ENCODE measurements at regions of chr19 and their contacts with region 1.

Region 1: DNA sequence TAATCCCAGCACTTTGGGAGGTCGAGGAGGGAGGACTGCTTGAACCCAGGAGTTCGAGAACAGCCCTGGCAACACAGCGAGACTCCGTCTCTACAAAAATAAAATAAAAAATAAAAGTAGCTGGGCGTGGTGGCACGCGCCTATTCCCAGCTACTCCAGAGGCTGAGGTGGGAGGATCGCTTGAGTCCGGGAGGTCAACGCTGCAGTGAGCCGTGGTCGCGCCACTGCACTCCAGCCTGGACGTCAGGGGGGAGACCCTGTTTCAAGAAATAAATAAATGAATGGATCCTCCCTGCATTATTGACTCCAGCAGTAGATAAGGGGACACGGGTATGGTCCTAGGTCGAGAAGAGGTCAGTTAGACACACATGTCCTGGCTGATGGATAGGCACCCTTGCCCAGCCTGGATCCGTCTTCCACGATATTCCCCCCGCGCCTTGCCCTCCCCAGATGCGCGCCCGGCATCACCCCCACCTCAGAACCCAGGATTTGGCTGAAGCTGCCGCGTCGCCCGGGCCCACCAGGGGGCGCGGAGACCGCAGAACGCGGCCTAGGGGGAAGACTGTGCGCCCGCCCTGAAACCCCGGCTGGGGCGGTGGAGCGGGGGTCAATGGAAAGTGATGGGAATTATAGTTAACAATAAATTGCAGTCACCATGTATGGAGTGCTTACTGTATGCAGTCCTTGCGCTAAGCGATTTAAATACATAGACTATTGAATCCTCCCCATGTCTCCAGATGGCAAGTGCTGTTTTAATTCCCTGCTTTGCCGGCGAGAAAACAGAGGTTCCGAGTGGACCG is 2.1 kb upstream of the HOOK2 start:
- DNase-seq: peak; percentile 83 to 91 (median 87)
- ATAC-seq: peak; percentile 27 to 52 (median 40)
- H3K4me3 ChIP-seq: peak overlapping the region; percentile 41 to 83 (median 68)
- H3K27ac ChIP-seq: peak overlapping the region; percentile 78 to 99 (median 94)
- H3K4me1 ChIP-seq: peaks cover 0 to 64% (median 49%) of the 10 kb centered on the region in 12 donors
- H3K27me3 ChIP-seq: no peaks in the 10 kb centered on the region
- CTCF ChIP-seq: peak; percentile 93 to 98 (median 97)
- POLR2A ChIP-seq: peak in 1 of 2 donors; percentile 15

Region 2: DNA sequence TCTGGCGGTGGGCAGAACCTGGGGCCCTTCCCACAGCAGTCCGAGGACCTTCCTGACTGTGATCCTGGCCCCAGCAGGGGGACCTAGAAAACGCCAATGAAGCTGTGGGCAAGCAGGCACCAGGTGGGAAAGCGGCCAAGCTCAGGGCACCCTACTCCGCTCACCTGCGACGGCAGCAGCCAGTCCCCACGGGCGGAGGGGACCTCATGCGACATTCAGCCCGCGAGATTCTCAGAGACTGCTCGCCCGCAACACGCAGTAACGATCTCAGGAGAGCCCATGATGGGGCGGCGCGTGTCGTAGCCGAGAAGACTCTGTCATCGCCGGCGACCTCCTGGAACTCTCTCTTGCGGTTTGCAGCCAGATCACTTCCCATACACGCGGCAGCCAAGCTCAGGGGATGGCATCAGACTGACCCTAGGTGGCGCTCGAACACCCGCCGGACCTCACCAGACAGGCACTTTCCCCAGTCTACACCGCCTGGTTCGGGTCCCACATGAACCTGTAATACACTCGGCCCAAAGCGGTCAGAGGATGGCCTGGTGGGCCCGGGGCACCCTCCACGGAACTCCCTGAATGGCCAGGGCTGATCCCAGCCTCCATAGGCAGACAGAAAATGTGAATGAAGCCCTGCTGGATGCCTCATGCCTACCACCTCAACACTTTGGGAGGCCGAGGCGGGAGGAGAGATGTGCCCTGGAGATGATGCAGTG is 137.4 kb before region 1 on chr19:
- intact Hi-C with region 1: no loop called
- DNase-seq: peak; percentile 78 to 89 (median 88)
- ATAC-seq: peak; percentile 65 to 93 (median 90)
- H3K4me3 ChIP-seq: peak overlapping the region in 9 of 12 donors; percentile 31 to 43 (median 33)
- H3K27ac ChIP-seq: no peak overlapping the region
- H3K4me1 ChIP-seq: peaks cover 0 to 12% (median 7%) of the 10 kb centered on the region in 12 donors
- H3K27me3 ChIP-seq: no peaks in the 10 kb centered on the region
- CTCF ChIP-seq: peak; percentile 64 to 87 (median 76)
- POLR2A ChIP-seq: no peak

Region 3: GRCh38 chr19:12789904-12790619 is 12.6 kb after region 1 on chr19:
- intact Hi-C with region 1: loop called in 3 of 10 experiments (anchors 2 kb)
- DNase-seq: peak; percentile 98 to 99 (median 98)
- ATAC-seq: peak; percentile 44 to 62 (median 54)
- H3K4me3 ChIP-seq: peak overlapping the region; percentile 15 to 99 (median 84)
- H3K27ac ChIP-seq: peak overlapping the region; percentile 95 to 100 (median 99)
- H3K4me1 ChIP-seq: peaks cover 0 to 65% (median 54%) of the 10 kb centered on the region in 12 donors
- H3K27me3 ChIP-seq: no peaks in the 10 kb centered on the region
- CTCF ChIP-seq: no peak
- POLR2A ChIP-seq: peak in 1 of 2 donors; percentile 83

Measured in heart left ventricle (tissue), 16 donors.